A549 (cell line): ENCODE measurements at regions of chr4 and their contacts with region 1.

Region 1: GRCh38 chr4:140861359-140862176 is 105.4 kb upstream of the TBC1D9 start:
- DNase-seq: peak; percentile 34 to 80
- ATAC-seq: peak; percentile 74 to 87; a peak in 5 of 6 replicates
- H3K4me3 ChIP-seq: no peak overlapping the region
- H3K27ac ChIP-seq: no peak overlapping the region
- H3K4me1 ChIP-seq: 0 out of 3 replicates have a peak, but pooled peaks cover 4% of the 10 kb centered on the region
- CTCF ChIP-seq: peak; percentile 75
- EP300 ChIP-seq: no peak
- POLR2A ChIP-seq: no peak
- RAD21 ChIP-seq: peak; percentile 84 to 90

Region 2: GRCh38 chr4:140568507-140569306 is 292.9 kb before region 1 on chr4 and contains the start of gene UCP1:
- CTCF ChIA-PET with region 1: no interaction called
- POLR2A ChIA-PET with region 1: no interaction called
- DNase-seq: peak in 1 of 2 experiments; percentile 10
- ATAC-seq: peak; percentile 64 to 87; a peak in 5 of 6 replicates
- H3K4me3 ChIP-seq: peak within 1 kb of the TSS; percentile 36
- H3K27ac ChIP-seq: peak within 1 kb of the TSS in 1 of 2 experiments; percentile 53; a peak in 1 of 6 replicates
- H3K4me1 ChIP-seq: no peaks in the 10 kb centered on the region
- CTCF ChIP-seq: no peak
- EP300 ChIP-seq: no peak
- POLR2A ChIP-seq: no peak
- RAD21 ChIP-seq: no peak
- polyA plus RNA-seq, gene UCP1: 0.13 TPM in 1 of 2 replicates, not detected in the other

Region 3: DNA sequence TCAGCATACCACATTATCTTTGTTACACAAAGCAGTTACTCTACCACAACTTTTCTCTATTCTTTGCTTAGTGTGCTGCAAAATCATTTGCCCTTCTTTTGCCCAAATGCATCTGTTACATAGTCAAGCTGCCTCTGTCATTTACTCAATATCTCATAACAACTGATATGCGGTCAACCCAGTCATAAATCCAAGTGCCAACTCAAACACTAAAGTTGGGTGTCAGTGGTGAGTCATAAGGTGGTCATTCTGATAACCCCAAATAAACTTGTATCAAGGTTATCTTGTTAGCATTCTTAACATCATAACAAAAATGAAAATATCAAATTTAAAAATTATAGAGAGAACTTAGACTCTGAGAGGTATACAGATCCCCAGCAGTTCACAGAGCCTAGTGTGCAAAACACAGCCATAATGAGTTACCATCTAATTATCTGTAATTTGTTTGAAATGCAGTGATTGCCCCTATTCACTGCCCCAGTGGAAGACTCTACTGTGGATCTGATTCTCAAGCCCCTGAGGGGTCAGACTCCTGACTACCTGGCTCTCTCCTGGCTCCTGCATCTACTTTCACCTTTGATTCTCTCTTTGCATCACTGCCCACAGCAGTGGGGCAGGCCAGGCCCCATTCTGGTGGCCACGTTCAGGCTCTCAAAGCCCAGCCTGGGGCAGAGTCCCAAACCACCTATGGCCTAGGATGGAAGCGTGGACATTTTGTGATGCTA is 134.6 kb before region 1 on chr4:
- CTCF ChIA-PET with region 1: no interaction called
- POLR2A ChIA-PET with region 1: no interaction called
- DNase-seq: peak; percentile 13 to 47
- ATAC-seq: peak; percentile 79 to 83
- H3K4me3 ChIP-seq: no peak overlapping the region
- H3K27ac ChIP-seq: peak overlapping the region; percentile 49 to 76; a peak in 5 of 6 replicates
- H3K4me1 ChIP-seq: peaks cover 45% of the 10 kb centered on the region
- CTCF ChIP-seq: no peak
- EP300 ChIP-seq: no peak
- POLR2A ChIP-seq: no peak
- RAD21 ChIP-seq: no peak

Region 4: GRCh38 chr4:140790765-140791164 is 70.8 kb before region 1 on chr4:
- CTCF ChIA-PET with region 1: no interaction called
- POLR2A ChIA-PET with region 1: no interaction called
- DNase-seq: no peak
- ATAC-seq: no peak
- H3K4me3 ChIP-seq: no peak overlapping the region
- H3K27ac ChIP-seq: no peak overlapping the region
- H3K4me1 ChIP-seq: no peaks in the 10 kb centered on the region
- CTCF ChIP-seq: no peak
- EP300 ChIP-seq: no peak
- POLR2A ChIP-seq: no peak
- RAD21 ChIP-seq: no peak

Region 5: DNA sequence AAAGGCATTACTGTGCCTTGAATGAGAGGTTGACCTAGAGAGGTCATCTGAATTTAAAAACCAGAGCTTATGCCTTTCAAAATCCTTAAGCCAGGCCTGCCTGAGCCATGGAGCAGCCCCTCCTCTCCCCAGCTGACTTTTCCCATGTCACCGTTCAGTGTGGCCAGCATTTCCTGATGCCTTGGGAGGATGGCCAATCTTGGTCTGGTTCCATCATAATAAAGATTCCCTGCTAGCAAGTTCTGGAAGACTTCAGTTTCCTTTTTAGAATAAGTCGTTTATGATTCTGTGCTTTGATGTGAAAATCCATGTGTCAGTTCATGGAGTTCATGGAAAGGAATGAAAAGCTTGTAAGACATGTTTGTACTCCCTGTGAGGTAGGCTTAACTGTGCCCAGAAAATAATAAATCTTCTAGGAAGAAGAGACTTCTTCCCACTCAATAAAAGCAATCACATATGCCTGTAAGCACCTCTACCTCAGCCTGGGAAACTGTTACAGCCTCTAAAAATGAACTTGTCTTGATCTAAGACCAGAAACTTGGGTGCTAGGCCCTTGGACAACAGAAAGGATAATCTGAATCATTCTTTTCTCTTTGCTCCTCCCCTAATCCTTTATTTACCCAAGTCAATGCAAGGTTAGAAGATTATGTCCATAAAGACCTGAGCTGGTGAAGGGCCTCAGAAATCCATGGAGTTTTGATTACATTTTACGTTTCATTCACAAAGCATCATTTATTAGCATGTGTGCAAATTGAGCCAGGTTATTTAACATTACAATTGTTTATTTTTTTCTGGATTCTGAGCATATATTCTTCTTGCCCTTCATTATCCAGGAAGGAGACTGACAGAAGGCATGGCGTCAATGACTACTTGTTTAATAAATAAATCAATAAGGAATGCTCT is 21.4 kb before region 1 on chr4:
- CTCF ChIA-PET with region 1: no interaction called
- POLR2A ChIA-PET with region 1: no interaction called
- DNase-seq: no peak
- ATAC-seq: no peak
- H3K4me3 ChIP-seq: no peak overlapping the region
- H3K27ac ChIP-seq: no peak overlapping the region
- H3K4me1 ChIP-seq: no peaks in the 10 kb centered on the region
- CTCF ChIP-seq: no peak
- EP300 ChIP-seq: no peak
- POLR2A ChIP-seq: no peak
- RAD21 ChIP-seq: no peak

Region 6: GRCh38 chr4:140884431-140885058 is 23.0 kb after region 1 on chr4:
- CTCF ChIA-PET with region 1: interaction called, 17 read pairs
- POLR2A ChIA-PET with region 1: no interaction called
- DNase-seq: peak; percentile 45 to 67
- ATAC-seq: peak; percentile 77 to 90
- H3K4me3 ChIP-seq: no peak overlapping the region
- H3K27ac ChIP-seq: no peak overlapping the region
- H3K4me1 ChIP-seq: no peaks in the 10 kb centered on the region
- CTCF ChIP-seq: peak; percentile 54
- EP300 ChIP-seq: no peak
- POLR2A ChIP-seq: no peak
- RAD21 ChIP-seq: peak; percentile 66 to 71

Region 7: DNA sequence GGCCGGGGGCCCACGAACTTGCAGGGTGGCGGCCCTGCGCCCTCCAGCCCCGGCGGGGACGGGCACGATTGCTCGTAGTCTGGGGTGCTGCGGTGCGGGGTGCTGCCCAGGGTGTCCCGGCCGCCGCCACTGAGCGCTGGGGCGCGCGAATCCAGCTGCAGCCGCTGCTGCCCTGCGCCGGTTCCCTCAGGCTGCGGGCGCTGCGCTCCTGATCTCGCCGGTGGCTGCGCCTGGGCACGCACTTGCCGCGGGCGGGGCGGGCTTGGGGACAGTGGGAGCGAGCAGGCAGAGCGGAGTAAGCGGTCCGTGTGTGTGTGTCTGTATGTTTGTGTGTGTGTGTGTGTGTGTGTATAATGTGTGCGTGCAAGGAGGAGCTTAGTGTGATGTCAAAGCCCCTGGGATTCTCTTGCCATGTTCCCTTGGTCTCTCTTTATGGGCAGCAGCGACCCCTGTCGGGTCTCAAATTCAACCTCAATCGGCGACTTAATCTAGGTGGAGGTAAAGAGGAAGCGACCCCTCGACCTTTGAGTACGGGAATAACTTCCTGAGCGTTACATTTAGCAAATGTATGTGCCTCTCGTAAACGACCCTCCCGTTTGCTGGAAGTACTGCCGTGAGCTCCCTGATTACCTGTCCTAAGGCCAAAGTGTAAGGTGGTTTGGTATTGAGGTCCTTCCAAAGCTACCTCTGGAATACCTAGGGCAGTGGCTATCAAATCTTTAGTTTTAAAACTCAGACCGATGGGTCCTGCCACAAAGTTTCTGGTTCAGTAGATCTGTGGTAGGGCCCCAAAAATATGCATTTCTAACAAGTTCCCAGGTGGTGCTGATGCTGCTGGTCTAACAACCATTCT is 271.8 kb after region 1 on chr4 and contains the start of gene RNF150:
- CTCF ChIA-PET with region 1: interaction called, 47 read pairs
- POLR2A ChIA-PET with region 1: no interaction called
- DNase-seq: peak; percentile 74 to 82
- ATAC-seq: peak; percentile 86 to 93
- H3K4me3 ChIP-seq: peak within 1 kb of the TSS; percentile 67
- H3K27ac ChIP-seq: peak within 1 kb of the TSS; percentile 51 to 84; a peak in 5 of 6 replicates
- H3K4me1 ChIP-seq: 0 out of 3 replicates have a peak, but pooled peaks cover 3% of the 10 kb centered on the region
- CTCF ChIP-seq: peak; percentile 72
- EP300 ChIP-seq: no peak
- POLR2A ChIP-seq: no peak
- RAD21 ChIP-seq: peak; percentile 78 to 82
- polyA plus RNA-seq, gene RNF150: 0.34 and 0.63 TPM in 2 replicates